Dendritic cell treated with granulocyte-macrophage colony-stimulating factor and Interleukin-4, amounts not matched to agents 40 ng/mL and 50 ng/mL, for 4 days (primary cell): ENCODE measurements at regions of chr1 and their contacts with region 1.

Region 1: DNA sequence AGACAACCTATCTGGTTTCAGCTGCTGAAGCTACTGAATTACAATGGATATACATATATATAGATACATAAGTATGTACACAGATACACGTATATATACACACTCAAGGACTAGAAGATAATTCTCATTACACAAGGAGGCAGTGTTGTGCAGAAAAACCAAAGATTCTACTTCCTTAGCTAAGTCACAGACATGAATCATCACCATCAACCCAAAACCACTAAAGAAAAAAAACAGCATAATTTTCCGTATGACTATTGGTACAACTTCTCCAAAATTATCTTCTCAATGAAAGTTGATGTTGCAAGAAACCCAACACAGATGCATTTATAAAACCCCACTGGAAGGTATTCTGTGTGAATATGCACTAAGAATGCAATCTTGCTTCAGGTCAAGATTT is 36.8 kb upstream of the RPF1 start:
- H3K4me3 Mint-ChIP-seq: no peak overlapping the region
- H3K27ac Mint-ChIP-seq: peak overlapping the region; percentile 72
- H3K4me1 Mint-ChIP-seq: peaks cover 15% of the 10 kb centered on the region
- H3K27me3 Mint-ChIP-seq: no peaks in the 10 kb centered on the region

Region 2: GRCh38 chr1:84478876-84479868 is 36.9 kb after region 1 on chr1 and contains the start of gene RPF1:
- intact Hi-C with region 1: loop called (anchors 2 kb)
- H3K4me3 Mint-ChIP-seq: peak within 1 kb of the TSS; percentile 99
- H3K27ac Mint-ChIP-seq: peak within 1 kb of the TSS; percentile 99
- H3K4me1 Mint-ChIP-seq: peaks cover 28% of the 10 kb centered on the region
- H3K27me3 Mint-ChIP-seq: peaks cover 7% of the 10 kb centered on the region

Region 3: GRCh38 chr1:84573967-84574842 is 131.9 kb after region 1 on chr1 and contains the start of gene CTBS:
- intact Hi-C with region 1: no loop called
- H3K4me3 Mint-ChIP-seq: peak within 1 kb of the TSS; percentile 97
- H3K27ac Mint-ChIP-seq: peak within 1 kb of the TSS; percentile 100
- H3K4me1 Mint-ChIP-seq: peaks cover 50% of the 10 kb centered on the region
- H3K27me3 Mint-ChIP-seq: no peaks in the 10 kb centered on the region

Region 4: DNA sequence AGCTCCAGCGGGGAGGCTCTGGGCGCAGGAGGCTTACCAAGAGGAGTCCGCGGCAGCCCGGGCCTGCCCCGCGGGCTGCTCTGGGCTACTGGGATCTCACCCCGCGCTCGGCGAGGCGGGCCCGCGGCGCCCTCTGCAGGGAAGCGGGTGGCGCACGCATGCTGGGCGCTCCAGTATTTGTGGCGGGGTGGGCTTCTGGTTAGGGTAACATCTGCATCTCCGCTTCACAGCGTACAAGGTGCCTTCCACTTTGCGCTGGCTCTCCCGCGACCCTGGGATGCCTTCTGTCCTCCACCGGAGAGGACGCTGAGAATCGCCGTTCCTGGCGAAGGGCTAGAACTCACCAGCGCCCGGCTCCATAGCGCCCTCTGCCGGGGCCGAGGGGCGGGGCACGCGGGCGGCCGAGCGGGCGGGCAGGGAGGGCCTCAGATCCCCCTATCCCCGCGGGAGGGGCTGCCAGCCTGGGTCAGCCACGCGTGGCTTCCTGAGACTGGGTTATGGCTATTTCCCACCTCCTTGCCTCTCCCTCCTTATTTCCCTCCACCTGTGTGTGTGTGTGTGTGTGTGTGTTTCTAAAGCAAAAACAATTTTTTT is 178.6 kb after region 1 on chr1:
- intact Hi-C with region 1: loop called (anchors 1 kb)
- H3K4me3 Mint-ChIP-seq: peak overlapping the region; percentile 88
- H3K27ac Mint-ChIP-seq: peak overlapping the region; percentile 91
- H3K4me1 Mint-ChIP-seq: peaks cover 30% of the 10 kb centered on the region
- H3K27me3 Mint-ChIP-seq: no peaks in the 10 kb centered on the region